ENCODE measurements at regions of chr6 and their contacts with region 1.

Region 1: DNA sequence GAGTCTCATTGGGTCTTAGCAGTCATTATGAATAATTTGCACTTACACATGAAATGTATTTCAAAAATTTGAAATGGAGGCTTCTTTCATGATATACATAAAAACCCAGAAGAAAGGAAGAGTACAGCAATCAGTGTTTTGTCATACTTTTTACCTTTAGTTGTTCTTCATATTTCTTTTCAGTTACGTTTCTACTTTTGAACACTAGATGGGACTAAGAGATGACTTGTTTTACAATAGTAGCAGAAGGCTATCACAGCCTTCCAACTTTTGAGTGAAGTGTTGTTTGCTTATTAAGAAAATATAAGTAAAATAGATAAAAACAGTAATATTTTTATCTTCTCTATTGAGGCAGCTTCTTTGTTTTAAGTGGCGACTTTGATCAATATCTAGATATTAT is 58.1 kb downstream of the L3MBTL3 start:
- DNase-seq: no peak
- H3K4me3 Mint-ChIP-seq: no peak overlapping the region
- H3K27ac Mint-ChIP-seq: no peak overlapping the region
- H3K4me1 Mint-ChIP-seq: no peaks in the 10 kb centered on the region
- H3K27me3 Mint-ChIP-seq: no peaks in the 10 kb centered on the region
- CTCF ChIP-seq: no peak

Region 2: DNA sequence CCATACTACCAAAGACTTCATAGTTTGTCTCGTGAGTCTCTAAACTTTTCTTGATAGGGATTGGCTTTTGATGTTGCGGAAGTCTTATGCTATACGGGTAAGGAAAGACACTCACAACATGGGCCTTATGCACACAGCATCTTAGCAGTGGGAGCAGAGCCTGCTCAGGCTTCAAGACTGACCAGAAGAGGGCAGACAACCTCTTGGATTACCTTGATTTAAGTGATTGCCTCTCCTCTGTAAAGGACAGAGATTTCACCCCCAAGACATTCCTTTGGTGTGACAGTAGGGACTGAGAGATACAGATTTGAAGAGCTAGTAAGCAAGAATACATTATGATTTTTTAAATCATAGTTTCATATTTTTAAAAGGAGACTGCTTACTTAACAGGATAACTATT is 217.3 kb after region 1 on chr6:
- CTCF ChIA-PET with region 1: no interaction called
- intact Hi-C with region 1: loop called (anchors 10 kb)
- DNase-seq: peak; percentile 40
- H3K4me3 Mint-ChIP-seq: no peak overlapping the region
- H3K27ac Mint-ChIP-seq: no peak overlapping the region
- H3K4me1 Mint-ChIP-seq: no peaks in the 10 kb centered on the region
- H3K27me3 Mint-ChIP-seq: peaks cover 24% of the 10 kb centered on the region
- CTCF ChIP-seq: no peak

Measured in Calu3 (cell line).